ENCODE measurements at regions of chr9 and their contacts with region 1.

Region 1: GRCh38 chr9:27726244-27727081 is 153.2 kb upstream of the C9orf72 start:
- DNase-seq: peak; percentile 27
- H3K4me3 Mint-ChIP-seq: no peak overlapping the region
- H3K27ac Mint-ChIP-seq: no peak overlapping the region
- H3K4me1 Mint-ChIP-seq: peaks cover 8% of the 10 kb centered on the region
- H3K27me3 Mint-ChIP-seq: peaks cover 3% of the 10 kb centered on the region

Region 2: GRCh38 chr9:27888661-27889295 is 162.3 kb after region 1 on chr9:
- intact Hi-C with region 1: loop called (anchors 1 kb)
- DNase-seq: peak; percentile 20
- H3K4me3 Mint-ChIP-seq: no peak overlapping the region
- H3K27ac Mint-ChIP-seq: no peak overlapping the region
- H3K4me1 Mint-ChIP-seq: no peaks in the 10 kb centered on the region
- H3K27me3 Mint-ChIP-seq: peaks cover 3% of the 10 kb centered on the region

Region 3: GRCh38 chr9:28774416-28775235 is 1048.2 kb after region 1 on chr9:
- intact Hi-C with region 1: loop called (anchors 10 kb)
- DNase-seq: no peak
- H3K4me3 Mint-ChIP-seq: no peak overlapping the region
- H3K27ac Mint-ChIP-seq: no peak overlapping the region
- H3K4me1 Mint-ChIP-seq: no peaks in the 10 kb centered on the region
- H3K27me3 Mint-ChIP-seq: no peaks in the 10 kb centered on the region

Measured in activated T-helper 2 cell treated with anti-CD3 and anti-CD28 coated beads, Interferon-gamma antibody, Interleukin-2, Interleukin-4, amounts not matched to agents 10 μg/mL and 5 μg/mL and 100 μg/mL, durations not matched to agents 14 hours and 24 hours and 36 hours (primary cell).